Breast epithelium (tissue), 4 donors: ENCODE measurements at regions of chr17 and their contacts with region 1.

Region 1: DNA sequence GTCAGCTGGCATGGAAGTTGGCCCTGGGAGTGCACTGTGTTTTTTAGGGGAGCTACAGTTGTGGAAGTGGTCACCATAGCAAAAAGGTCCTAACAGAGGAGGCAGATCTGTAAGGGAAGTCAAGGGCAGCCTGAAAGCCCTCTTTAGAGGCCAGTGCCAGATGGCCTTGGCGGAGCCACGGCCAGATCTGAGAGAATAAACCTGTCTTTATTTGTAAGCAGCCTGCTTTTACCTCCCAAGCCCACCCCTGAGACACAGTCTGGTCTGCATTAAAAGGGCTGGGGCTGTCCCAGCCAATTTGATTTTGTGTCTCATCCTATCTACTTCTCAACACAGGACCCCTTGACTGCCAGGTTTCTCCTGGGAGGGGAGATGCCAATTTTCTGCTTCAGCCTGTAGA is 51.0 kb upstream of the NOL11 start:
- DNase-seq: no peak
- H3K4me3 ChIP-seq: no peak overlapping the region
- H3K27ac ChIP-seq: no peak overlapping the region
- H3K4me1 ChIP-seq: no peaks in the 10 kb centered on the region
- H3K27me3 ChIP-seq: no peaks in the 10 kb centered on the region
- CTCF ChIP-seq: no peak
- POLR2A ChIP-seq: no peak

Region 2: DNA sequence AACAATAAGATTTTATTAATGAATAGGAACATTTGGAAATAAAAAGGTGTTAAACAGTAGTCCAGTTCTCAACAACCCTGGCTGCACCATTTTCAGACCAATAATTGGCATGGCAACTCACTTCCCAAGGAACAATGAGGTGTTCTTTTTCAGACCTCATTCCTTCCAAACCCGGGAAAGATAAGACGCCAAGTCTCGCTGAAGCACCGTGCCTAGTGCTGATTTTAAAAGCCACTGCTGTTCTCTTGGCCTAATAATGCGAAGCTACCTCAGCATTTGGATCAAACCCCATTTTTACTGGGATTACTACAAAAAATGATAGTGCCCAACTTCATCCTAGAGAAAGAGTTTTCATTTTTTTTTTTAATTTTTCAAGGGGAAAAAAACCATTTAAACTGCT is 24.2 kb before region 1 on chr17:
- intact Hi-C with region 1: loop called (anchors 1 kb)
- DNase-seq: no peak
- H3K4me3 ChIP-seq: no peak overlapping the region
- H3K27ac ChIP-seq: no peak overlapping the region
- H3K4me1 ChIP-seq: peaks cover 0 to 6% of the 10 kb centered on the region in 2 donors
- H3K27me3 ChIP-seq: no peaks in the 10 kb centered on the region
- CTCF ChIP-seq: no peak
- POLR2A ChIP-seq: no peak